Activated CD4-positive, alpha-beta memory T cell treated with anti-CD3 and anti-CD28 coated beads, Interleukin-2, amount 10 ng/mL, durations not matched to agents 7 days and 5 days (primary cell): ENCODE measurements at regions of chr11 and their contacts with region 1.

Region 1: DNA sequence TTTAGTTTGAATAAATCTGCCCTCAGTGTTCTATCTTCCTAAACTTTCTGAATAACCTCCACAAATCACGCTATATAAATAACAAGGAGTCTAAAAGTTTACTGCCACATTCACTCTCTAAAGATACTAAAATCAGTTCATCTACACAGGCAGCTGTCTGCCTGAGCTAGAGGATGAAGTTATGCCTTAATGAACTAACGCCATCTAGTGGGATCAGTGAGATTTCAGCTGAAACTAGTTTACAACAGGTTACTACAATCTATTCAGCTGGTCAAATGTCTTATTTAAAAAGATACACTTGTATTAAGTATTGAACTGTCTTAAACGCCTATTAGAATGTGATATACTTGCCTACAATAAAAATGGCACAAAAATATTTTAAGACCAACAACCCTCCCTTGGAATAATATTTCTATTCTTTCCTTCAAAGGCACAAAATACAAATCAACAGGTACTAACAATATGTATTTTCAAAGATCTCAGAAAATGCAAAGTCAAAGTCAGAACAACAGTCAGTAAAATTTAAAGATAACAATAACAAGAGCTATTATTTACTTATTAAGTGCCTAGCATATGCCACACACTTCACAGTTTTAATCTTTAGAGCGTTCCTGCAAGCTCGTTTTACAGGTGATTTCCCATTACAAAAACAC is 84.1 kb downstream of the LARGE2 start:
- DNase-seq: no peak
- H3K4me3 Mint-ChIP-seq: no peak overlapping the region
- H3K27ac Mint-ChIP-seq: no peak overlapping the region
- H3K4me1 Mint-ChIP-seq: peaks cover 2% of the 10 kb centered on the region
- H3K27me3 Mint-ChIP-seq: no peaks in the 10 kb centered on the region

Region 2: DNA sequence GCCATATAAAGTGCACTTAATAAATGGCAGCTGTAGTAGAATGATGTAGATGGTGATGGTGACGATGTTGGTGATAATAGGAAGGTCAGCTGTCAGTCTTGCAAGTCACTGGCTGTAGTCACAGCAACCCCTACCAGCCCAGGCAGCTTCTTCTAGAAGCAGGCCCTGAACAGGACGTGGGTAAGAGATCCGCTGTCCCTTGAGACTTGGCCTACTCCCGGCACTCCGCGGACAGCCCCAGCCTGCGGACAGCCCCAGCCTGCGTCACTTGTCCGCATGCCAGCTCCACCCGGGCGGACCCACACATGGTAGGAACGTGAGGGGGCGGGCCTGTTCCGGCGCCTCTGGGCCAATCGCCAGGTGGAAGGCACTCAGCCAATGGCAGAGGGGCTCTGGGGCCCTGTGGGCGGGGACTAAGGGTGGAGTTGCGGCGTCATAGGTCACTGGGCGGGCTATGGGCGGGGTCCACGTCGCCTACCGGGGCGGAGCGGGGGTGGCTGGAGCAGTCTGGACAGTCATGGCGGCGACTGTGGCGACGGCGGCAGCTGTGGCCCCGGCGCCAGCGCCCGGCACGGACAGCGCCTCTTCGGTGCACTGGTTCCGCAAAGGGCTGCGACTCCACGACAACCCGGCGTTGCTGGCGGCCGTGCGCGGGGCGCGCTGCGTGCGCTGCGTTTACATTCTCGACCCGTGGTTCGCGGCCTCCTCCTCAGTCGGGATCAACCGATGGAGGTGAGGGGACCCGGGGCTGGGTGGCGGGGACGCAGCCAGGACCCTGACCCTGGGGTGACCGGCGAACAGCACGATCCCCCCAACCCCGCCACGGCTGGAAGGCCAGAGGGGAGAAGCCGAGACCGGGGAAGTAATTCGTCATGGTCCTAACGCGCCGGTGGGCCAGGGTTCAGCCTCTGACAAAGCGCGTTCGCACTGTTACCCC is 159.3 kb before region 1 on chr11 and contains the start of gene CRY2:
- CTCF ChIA-PET with region 1: interaction called, 12 read pairs
- POLR2A ChIA-PET with region 1: interaction called, 3 read pairs
- DNase-seq: peak; percentile 98
- H3K4me3 Mint-ChIP-seq: peak within 1 kb of the TSS; percentile 79
- H3K27ac Mint-ChIP-seq: peak within 1 kb of the TSS; percentile 72
- H3K4me1 Mint-ChIP-seq: peaks cover 54% of the 10 kb centered on the region
- H3K27me3 Mint-ChIP-seq: peaks cover 11% of the 10 kb centered on the region
- total RNA-seq, gene CRY2: 18.4 to 22.7 TPM

Region 3: DNA sequence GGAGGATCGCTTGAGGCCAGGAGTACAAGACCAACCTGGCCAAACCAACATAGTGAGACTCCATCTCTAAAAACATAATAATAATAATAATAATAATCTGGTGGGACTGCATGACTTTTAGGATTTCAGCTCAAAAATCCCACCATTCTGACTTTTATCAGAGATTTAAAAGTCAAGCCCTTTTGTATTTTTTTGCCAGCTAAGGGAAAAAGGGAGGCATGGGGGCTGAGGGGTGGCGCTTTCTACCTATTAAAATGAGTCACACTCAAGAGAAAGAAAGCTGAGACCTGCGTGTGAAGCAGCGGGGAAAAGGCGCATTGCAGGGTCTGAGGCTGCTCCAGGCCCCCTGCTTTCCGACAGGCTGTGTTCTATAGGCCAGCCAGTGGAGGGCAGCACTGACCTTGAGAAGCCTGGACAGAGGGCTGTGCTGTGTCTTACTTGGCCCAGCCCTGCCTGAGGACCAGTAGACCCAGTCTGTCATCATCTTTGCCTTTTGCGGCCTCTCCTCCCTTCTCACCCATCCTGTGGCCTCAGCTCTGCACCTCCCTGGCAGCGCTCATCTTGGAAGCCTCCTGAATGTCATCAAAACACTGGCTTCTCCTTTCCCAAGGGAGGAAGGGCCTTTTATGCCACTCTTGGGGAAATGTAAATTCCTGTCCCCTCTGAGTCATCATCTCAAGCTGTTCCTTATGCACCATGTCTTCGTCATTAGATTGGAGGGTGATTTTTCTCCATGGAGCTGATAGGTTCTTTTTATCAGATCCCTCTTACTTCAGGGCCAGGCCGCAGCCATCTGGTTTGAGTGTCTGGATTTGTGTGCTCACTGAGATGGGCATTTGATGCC is 133.8 kb before region 1 on chr11:
- CTCF ChIA-PET with region 1: interaction called, 37 read pairs
- POLR2A ChIA-PET with region 1: no interaction called
- DNase-seq: peak; percentile 43
- H3K4me3 Mint-ChIP-seq: no peak overlapping the region
- H3K27ac Mint-ChIP-seq: no peak overlapping the region
- H3K4me1 Mint-ChIP-seq: no peaks in the 10 kb centered on the region
- H3K27me3 Mint-ChIP-seq: no peaks in the 10 kb centered on the region

Region 4: GRCh38 chr11:45930031-45930794 is 76.3 kb before region 1 on chr11:
- CTCF ChIA-PET with region 1: interaction called, 15 read pairs
- POLR2A ChIA-PET with region 1: no interaction called
- DNase-seq: peak; percentile 73
- H3K4me3 Mint-ChIP-seq: peak overlapping the region; percentile 50
- H3K27ac Mint-ChIP-seq: peak overlapping the region; percentile 95
- H3K4me1 Mint-ChIP-seq: peaks cover 35% of the 10 kb centered on the region
- H3K27me3 Mint-ChIP-seq: no peaks in the 10 kb centered on the region

Region 5: GRCh38 chr11:46200537-46201281 is 194.2 kb after region 1 on chr11:
- CTCF ChIA-PET with region 1: no interaction called
- POLR2A ChIA-PET with region 1: no interaction called
- DNase-seq: no peak
- H3K4me3 Mint-ChIP-seq: no peak overlapping the region
- H3K27ac Mint-ChIP-seq: no peak overlapping the region
- H3K4me1 Mint-ChIP-seq: no peaks in the 10 kb centered on the region
- H3K27me3 Mint-ChIP-seq: peaks cover 50% of the 10 kb centered on the region